IMR-90 (cell line): ENCODE measurements at regions of chr17 and their contacts with region 1.

Region 1: GRCh38 chr17:40699371-40699770 is 4.2 kb downstream of the KRT24 start:
- DNase-seq: no peak
- ATAC-seq: no peak
- H3K4me3 ChIP-seq: no peak overlapping the region
- H3K27ac ChIP-seq: no peak overlapping the region
- H3K4me1 ChIP-seq: no peaks in the 10 kb centered on the region
- H3K27me3 ChIP-seq: peaks cover 61% of the 10 kb centered on the region
- CTCF ChIP-seq: no peak
- POLR2A ChIP-seq: no peak
- RAD21 ChIP-seq: no peak

Region 2: DNA sequence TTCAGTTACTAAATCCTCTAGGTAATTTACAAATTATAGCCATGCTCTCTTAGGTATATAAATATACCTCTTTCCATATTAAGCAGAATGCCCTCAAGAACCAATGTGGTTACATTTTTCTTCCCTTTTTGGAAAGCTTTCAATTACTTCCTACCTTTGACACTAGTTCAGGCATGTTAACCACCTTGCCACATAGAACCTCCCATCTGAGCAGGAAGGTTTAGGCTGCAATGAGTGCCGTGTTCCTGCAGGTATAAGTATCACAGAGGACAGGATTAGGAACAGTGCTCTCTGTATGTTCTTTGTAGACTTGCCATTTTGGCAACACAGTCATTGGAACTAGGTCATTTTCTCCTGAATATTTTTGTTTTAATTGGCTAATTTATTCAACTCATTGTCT is 35.6 kb after region 1 on chr17:
- CTCF ChIA-PET with region 1: no interaction called
- POLR2A ChIA-PET with region 1: interaction called, 14 read pairs
- dilution Hi-C with region 1: no loop called
- in situ Hi-C with region 1: no loop called
- intact Hi-C with region 1: no loop called
- DNase-seq: no peak
- ATAC-seq: no peak
- H3K4me3 ChIP-seq: no peak overlapping the region
- H3K27ac ChIP-seq: no peak overlapping the region
- H3K4me1 ChIP-seq: no peaks in the 10 kb centered on the region
- H3K27me3 ChIP-seq: peaks cover 42% of the 10 kb centered on the region
- CTCF ChIP-seq: no peak
- POLR2A ChIP-seq: no peak
- RAD21 ChIP-seq: no peak